ENCODE measurements at regions of chr2 and their contacts with region 1.

Region 1: GRCh38 chr2:200901459-200902072 is 12.4 kb downstream of the NIF3L1 start:
- DNase-seq: peak; percentile 50 to 62
- H3K4me3 ChIP-seq: no peak overlapping the region
- H3K27ac ChIP-seq: no peak overlapping the region
- H3K4me1 ChIP-seq: no peaks in the 10 kb centered on the region
- H3K27me3 ChIP-seq: no peaks in the 10 kb centered on the region
- CTCF ChIP-seq: peak in 2 of 3 experiments; percentile 84 to 89; a peak in 3 of 4 replicates
- EP300 ChIP-seq: no peak
- POLR2A ChIP-seq: no peak
- RAD21 ChIP-seq: peak; percentile 72 to 81

Region 2: GRCh38 chr2:200888704-200889625 is 12.6 kb before region 1 on chr2 and contains the starts of genes NIF3L1 and PPIL3:
- CTCF ChIA-PET with region 1: interaction called, 13 read pairs
- POLR2A ChIA-PET with region 1: interaction called, 24 read pairs
- DNase-seq: peak; percentile 92 to 94
- H3K4me3 ChIP-seq: peak within 1 kb of the TSS; percentile 81 to 100 (median 93)
- H3K27ac ChIP-seq: peak within 1 kb of the TSS; percentile 97
- H3K4me1 ChIP-seq: no peaks in the 10 kb centered on the region
- H3K27me3 ChIP-seq: no peaks in the 10 kb centered on the region
- CTCF ChIP-seq: no peak
- EP300 ChIP-seq: peak in 1 of 2 experiments; percentile 70; a peak in 1 of 3 replicates
- POLR2A ChIP-seq: peak; percentile 82 to 85; a peak in 2 of 3 replicates
- RAD21 ChIP-seq: no peak
- total RNA-seq, gene NIF3L1: 63.4 and 65.1 TPM in 2 replicates
- total RNA-seq, gene PPIL3: 30.4 and 34.1 TPM in 2 replicates

Region 3: DNA sequence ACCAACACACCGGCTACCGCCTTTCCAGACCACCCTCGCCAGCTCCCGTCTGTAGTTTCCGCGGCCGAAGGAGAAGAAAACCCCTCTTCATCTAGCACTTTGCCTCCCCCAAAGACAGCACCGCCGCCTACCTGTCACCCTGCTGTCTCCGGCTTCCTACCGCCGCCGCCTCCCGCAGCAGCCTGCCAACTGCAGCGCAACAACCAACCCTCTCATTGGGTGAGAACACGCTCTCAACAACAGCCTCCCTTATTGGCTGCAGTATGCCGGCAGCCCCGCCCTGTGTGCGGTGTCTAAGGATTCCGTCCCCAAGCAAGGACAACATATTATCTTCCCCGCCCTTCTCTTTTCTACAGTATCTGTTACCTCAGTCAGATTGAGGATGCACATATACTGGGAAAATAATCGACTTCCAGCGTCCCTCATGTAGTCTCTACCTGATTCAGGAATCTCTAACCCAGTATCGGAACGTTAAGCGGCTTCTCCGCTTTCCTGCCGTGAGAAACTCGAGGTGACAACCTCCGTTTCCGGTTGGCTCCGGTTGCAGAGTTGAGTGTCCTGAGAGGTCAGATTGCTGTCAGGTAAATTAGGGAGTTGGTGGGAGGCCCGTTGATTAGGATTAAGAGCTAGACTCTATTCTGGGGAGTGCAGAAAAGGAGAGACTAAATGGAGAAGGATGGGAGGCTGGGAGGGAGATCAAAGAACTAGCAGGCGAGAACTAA is 170.1 kb after region 1 on chr2 and contains the starts of genes HYCC2 and NDUFB3:
- CTCF ChIA-PET with region 1: interaction called, 21 read pairs
- POLR2A ChIA-PET with region 1: no interaction called
- DNase-seq: peak; percentile 85 to 90
- H3K4me3 ChIP-seq: peak within 1 kb of the TSS; percentile 82 to 99 (median 87)
- H3K27ac ChIP-seq: peak within 1 kb of the TSS; percentile 98
- H3K4me1 ChIP-seq: peaks cover 0 to 3% (median 0%) of the 10 kb centered on the region in 4 experiments; a peak in 2 of 7 replicates
- H3K27me3 ChIP-seq: no peaks in the 10 kb centered on the region
- CTCF ChIP-seq: peak; percentile 5 to 28 (median 24)
- EP300 ChIP-seq: peak in 1 of 2 experiments; percentile 11; a peak in 1 of 3 replicates
- POLR2A ChIP-seq: peak in 1 of 2 experiments; percentile 64; a peak in 1 of 3 replicates
- RAD21 ChIP-seq: peak in 1 of 2 experiments; percentile 19; a peak in 2 of 4 replicates
- total RNA-seq, gene HYCC2: 7.8 and 8.0 TPM in 2 replicates
- total RNA-seq, gene NDUFB3: 55.3 and 57.5 TPM in 2 replicates

Region 4: DNA sequence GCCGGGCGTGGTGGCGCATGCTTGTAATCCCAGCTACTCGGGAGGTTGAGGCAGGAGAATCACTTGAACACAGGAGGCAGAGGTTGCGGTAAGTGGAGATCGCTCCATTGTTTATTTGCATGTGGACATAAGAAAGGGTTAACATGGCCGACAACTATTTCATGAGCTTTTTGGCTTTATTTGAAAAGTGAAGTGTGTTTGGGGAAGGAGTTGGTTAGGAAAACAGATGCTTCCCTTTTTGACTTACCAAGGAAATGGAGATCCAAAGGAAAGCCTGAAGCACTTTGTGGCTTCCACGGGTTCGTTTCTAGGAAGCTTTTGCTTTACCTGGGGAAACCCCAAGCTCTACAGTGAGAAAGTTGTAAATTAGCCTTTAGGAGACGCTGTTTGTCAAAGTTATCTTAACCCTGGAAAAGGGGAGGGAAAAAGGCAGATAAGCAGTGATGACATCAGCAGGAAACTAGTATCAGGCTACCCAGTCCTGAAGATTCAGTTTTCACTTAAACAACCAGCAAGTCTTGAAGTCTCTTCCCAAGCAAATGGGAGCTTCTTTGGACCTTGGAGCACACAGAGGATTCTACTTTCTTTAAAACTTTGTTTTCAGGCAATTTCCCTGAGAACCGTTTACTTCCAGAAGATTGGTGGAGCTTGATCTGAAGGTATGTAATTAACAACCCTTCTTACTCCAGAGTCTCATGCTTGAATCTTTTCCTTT is 281.2 kb after region 1 on chr2 and contains the start of gene CASP10:
- CTCF ChIA-PET with region 1: interaction called, 25 read pairs
- POLR2A ChIA-PET with region 1: no interaction called
- DNase-seq: no peak
- H3K4me3 ChIP-seq: peak within 1 kb of the TSS in 3 of 4 experiments; percentile 5 to 47 (median 17); a peak in 4 of 8 replicates
- H3K27ac ChIP-seq: peak within 1 kb of the TSS; percentile 46; the same call in 1 of the 2 replicates
- H3K4me1 ChIP-seq: no peaks in the 10 kb centered on the region
- H3K27me3 ChIP-seq: no peaks in the 10 kb centered on the region
- CTCF ChIP-seq: peak in 2 of 3 experiments; percentile 43 to 60; a peak in 3 of 4 replicates
- EP300 ChIP-seq: no peak
- POLR2A ChIP-seq: peak in 1 of 2 experiments; percentile 58; a peak in 1 of 3 replicates
- RAD21 ChIP-seq: peak; percentile 63 to 71
- total RNA-seq, gene CASP10: 4.0 and 4.2 TPM in 2 replicates

Measured in H1 (cell line).